Calu3 (cell line): ENCODE measurements at regions of chr5 and their contacts with region 1.

Region 1: DNA sequence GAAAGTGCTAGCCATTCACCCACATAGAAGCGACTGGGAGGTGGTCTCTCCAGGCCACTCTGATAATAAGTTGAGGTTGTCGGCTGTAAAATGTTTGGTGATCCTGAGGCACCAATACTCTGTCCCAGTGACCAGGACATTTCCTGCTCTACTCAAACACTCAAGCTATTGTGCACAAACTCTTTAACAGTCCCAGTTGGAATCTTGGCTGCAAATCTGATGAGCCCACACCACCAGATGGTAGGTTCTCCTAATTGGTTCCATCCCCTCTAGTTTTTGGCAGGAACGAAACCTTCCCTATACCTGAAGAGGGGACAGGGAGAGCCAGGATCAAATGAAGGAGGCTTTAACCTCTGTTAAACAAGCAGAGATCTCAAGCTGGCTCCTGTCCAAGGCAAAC is 14.3 kb downstream of the GRIA1 start:
- DNase-seq: no peak
- H3K4me3 Mint-ChIP-seq: no peak overlapping the region
- H3K27ac Mint-ChIP-seq: no peak overlapping the region
- H3K4me1 Mint-ChIP-seq: no peaks in the 10 kb centered on the region
- H3K27me3 Mint-ChIP-seq: peaks cover 56% of the 10 kb centered on the region
- CTCF ChIP-seq: no peak

Region 2: DNA sequence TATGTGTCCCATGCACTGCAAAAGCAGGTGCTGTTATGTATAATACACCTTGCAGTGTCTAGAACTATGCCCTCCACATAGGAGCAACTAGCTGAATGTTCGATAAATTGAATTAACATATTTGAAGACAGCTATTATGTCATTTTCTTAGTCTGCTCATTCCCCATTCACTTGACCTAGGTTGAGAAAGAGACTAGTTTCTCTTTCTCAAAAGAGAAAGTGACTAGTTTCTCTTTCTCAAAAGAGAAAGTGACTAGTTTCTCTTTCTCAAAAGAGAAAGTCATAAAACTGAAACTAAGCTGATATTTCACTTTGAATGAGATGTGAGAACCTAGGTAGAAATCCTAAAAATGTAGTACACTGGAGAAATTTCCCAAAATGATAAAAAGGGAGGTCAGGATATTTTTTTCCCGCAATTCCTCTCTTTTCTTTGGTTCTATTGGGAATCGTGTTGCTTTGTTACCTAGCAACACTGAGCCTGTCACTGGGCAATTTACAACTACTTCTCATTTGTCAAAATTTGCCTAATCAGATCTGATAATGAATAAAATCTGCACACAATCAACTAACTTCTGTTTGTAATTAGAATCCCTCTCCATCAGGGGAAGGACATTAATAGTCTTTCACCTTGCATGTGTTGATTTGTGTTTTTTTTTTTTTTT is 146.3 kb before region 1 on chr5:
- CTCF ChIA-PET with region 1: no interaction called
- intact Hi-C with region 1: no loop called
- DNase-seq: no peak
- H3K4me3 Mint-ChIP-seq: no peak overlapping the region
- H3K27ac Mint-ChIP-seq: no peak overlapping the region
- H3K4me1 Mint-ChIP-seq: no peaks in the 10 kb centered on the region
- H3K27me3 Mint-ChIP-seq: no peaks in the 10 kb centered on the region
- CTCF ChIP-seq: no peak

Region 3: DNA sequence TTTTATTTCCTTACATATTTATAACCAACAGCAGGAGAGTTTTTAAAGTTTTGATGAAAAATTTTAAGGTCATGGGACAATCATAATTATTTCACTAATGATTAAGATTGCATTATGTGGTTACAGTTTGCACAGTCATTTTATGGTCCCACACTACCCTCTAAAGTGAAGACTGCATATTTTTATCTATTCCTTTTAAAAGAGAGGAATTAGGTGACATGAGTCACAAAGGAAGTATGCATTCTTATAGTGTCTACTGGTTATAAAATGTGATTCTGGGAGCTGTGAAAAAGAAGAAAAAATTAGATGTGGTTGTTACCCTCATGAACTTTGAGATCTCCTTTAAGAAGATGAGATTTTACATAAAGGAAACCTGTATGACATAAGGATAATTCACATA is 102.2 kb before region 1 on chr5:
- CTCF ChIA-PET with region 1: no interaction called
- intact Hi-C with region 1: no loop called
- DNase-seq: no peak
- H3K4me3 Mint-ChIP-seq: no peak overlapping the region
- H3K27ac Mint-ChIP-seq: no peak overlapping the region
- H3K4me1 Mint-ChIP-seq: no peaks in the 10 kb centered on the region
- H3K27me3 Mint-ChIP-seq: no peaks in the 10 kb centered on the region
- CTCF ChIP-seq: no peak

Region 4: DNA sequence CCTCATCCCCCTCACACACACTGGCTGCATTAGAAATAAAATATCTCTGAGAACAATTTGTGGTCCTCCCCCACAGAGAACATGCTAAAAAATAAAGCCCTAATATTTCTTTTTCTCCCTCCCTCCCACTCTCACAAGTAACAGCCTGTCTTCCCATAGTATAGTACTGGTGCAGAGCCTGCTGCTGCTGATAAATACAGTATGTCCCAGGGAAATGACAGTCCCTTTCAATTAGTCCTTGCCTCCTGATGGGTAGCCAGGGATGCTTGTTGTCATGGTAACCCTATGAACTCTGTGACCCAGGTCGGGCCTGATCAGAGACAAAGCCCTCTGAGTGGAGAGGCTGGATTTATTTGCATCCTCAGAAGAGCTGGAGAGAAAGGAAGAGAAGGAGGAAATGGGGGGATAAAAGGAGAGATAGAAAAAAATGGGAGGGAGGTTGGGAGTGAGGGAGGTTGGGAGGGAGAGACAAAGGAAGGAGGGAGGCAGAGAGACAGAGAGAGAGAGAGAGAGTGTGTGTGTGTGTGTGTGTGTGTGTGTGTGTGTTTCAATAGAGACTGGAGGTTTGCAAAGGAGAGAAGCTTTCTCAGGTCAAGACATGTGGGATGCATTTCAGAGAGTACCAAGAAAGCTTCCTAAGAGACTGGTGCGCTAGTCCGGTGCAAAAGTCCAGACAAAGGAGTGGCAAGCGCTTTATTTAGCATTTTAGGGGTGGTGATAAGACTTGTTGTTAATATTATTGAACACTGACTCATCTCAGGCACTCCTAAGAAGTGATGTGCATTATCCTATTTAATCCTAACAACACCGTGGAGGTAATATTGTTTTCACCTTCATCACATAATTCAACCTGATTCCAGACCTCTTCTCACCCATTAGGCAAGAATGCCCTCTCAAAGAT is 273.2 kb after region 1 on chr5:
- CTCF ChIA-PET with region 1: no interaction called
- intact Hi-C with region 1: loop called (anchors 10 kb)
- DNase-seq: no peak
- H3K4me3 Mint-ChIP-seq: no peak overlapping the region
- H3K27ac Mint-ChIP-seq: no peak overlapping the region
- H3K4me1 Mint-ChIP-seq: no peaks in the 10 kb centered on the region
- H3K27me3 Mint-ChIP-seq: peaks cover 50% of the 10 kb centered on the region
- CTCF ChIP-seq: no peak